ENCODE measurements at regions of chr17 and their contacts with region 1.

Region 1: GRCh38 chr17:39730095-39730921 is at the start of gene MIEN1:
- DNase-seq: peak; percentile 89 to 99 (median 95)
- ATAC-seq: peak; percentile 93
- H3K4me3 ChIP-seq: peak within 1 kb of the TSS; percentile 64 to 72
- H3K4me3 Mint-ChIP-seq: peak within 1 kb of the TSS; percentile 90
- H3K27ac ChIP-seq: peak within 1 kb of the TSS; percentile 78 to 91
- H3K27ac Mint-ChIP-seq: peak within 1 kb of the TSS; percentile 94
- H3K4me1 ChIP-seq: peaks cover 17% of the 10 kb centered on the region
- H3K4me1 Mint-ChIP-seq: peaks cover 17% of the 10 kb centered on the region
- H3K27me3 ChIP-seq: no peaks in the 10 kb centered on the region
- H3K27me3 Mint-ChIP-seq: no peaks in the 10 kb centered on the region
- CTCF ChIP-seq: peak; percentile 98
- total RNA-seq, gene MIEN1: 29.5 to 30.1 TPM

Region 2: GRCh38 chr17:39653662-39654331 is 76.5 kb before region 1 on chr17:
- CTCF ChIA-PET with region 1: interaction called, 16 read pairs
- POLR2A ChIA-PET with region 1: no interaction called
- intact Hi-C with region 1: no loop called
- DNase-seq: peak; percentile 64 to 88 (median 81)
- ATAC-seq: peak; percentile 82
- H3K4me3 ChIP-seq: no peak overlapping the region
- H3K4me3 Mint-ChIP-seq: no peak overlapping the region
- H3K27ac ChIP-seq: no peak overlapping the region
- H3K27ac Mint-ChIP-seq: no peak overlapping the region
- H3K4me1 ChIP-seq: peaks cover 41% of the 10 kb centered on the region
- H3K4me1 Mint-ChIP-seq: peaks cover 60% of the 10 kb centered on the region
- H3K27me3 ChIP-seq: no peaks in the 10 kb centered on the region
- H3K27me3 Mint-ChIP-seq: no peaks in the 10 kb centered on the region
- CTCF ChIP-seq: peak; percentile 83

Region 3: GRCh38 chr17:39687811-39688518 is 42.3 kb before region 1 on chr17 and contains the start of gene PGAP3:
- CTCF ChIA-PET with region 1: interaction called, 10 read pairs
- POLR2A ChIA-PET with region 1: interaction called, 11 read pairs
- intact Hi-C with region 1: loop called (anchors 1 kb)
- DNase-seq: peak; percentile 54 to 92 (median 85)
- ATAC-seq: peak; percentile 93
- H3K4me3 ChIP-seq: peak within 1 kb of the TSS; percentile 68 to 85
- H3K4me3 Mint-ChIP-seq: peak within 1 kb of the TSS; percentile 97
- H3K27ac ChIP-seq: peak within 1 kb of the TSS; percentile 80 to 86
- H3K27ac Mint-ChIP-seq: peak within 1 kb of the TSS; percentile 98
- H3K4me1 ChIP-seq: peaks cover 17% of the 10 kb centered on the region
- H3K4me1 Mint-ChIP-seq: peaks cover 27% of the 10 kb centered on the region
- H3K27me3 ChIP-seq: peaks cover 0 to 2% of the 10 kb centered on the region in 2 experiments
- H3K27me3 Mint-ChIP-seq: no peaks in the 10 kb centered on the region
- CTCF ChIP-seq: no peak
- total RNA-seq, gene PGAP3: 20.9 to 22.6 TPM

Region 4: DNA sequence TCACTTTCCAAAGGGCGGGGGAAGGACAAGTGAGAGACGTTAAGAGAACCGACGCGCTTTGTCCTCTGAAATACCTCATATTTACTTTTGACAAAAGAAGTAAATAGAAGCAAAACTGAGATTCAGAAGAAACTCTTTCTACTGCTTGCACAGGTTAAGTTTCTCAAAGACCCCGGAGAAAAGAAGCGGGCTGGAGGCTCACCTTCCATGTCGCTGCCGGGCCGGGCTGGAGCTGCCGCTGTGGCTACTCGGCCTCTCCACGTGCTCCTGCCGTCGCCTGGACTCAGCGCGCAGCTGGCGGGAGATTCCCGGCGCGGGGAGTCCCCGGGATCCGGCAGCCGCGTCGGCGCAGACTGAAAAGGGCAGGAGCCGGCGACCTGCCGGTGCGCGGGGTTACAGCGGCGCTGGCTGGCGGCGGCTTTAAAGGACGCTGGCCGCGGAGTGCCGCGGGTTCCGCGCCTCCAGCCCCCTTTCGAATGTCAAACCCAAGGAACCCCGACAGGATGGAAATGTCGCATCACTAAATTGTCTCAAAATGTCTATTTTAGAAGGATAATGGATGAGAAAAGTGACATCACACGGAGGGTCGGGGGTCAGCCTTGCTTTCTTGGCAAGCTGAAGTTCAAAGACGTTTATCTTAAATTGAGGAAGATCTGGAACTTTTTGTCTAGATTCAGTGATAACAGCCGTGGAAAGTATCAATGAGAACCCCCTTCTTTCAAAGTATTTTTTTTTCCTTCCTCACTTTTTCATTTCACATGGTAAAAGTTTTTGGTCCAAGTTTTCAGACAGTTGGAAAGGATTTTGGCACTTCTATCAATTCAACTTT is 133.8 kb after region 1 on chr17 and contains the start of gene IKZF3:
- CTCF ChIA-PET with region 1: interaction called, 10 read pairs
- POLR2A ChIA-PET with region 1: interaction called, 5 read pairs
- intact Hi-C with region 1: loop called (anchors 1 kb)
- DNase-seq: peak; percentile 59 to 96 (median 78)
- ATAC-seq: peak; percentile 67
- H3K4me3 ChIP-seq: peak within 1 kb of the TSS; percentile 65 to 74
- H3K4me3 Mint-ChIP-seq: peak within 1 kb of the TSS; percentile 89
- H3K27ac ChIP-seq: peak within 1 kb of the TSS; percentile 92 to 94
- H3K27ac Mint-ChIP-seq: peak within 1 kb of the TSS; percentile 98
- H3K4me1 ChIP-seq: peaks cover 56% of the 10 kb centered on the region
- H3K4me1 Mint-ChIP-seq: peaks cover 61% of the 10 kb centered on the region
- H3K27me3 ChIP-seq: no peaks in the 10 kb centered on the region
- H3K27me3 Mint-ChIP-seq: no peaks in the 10 kb centered on the region
- CTCF ChIP-seq: peak; percentile 49
- total RNA-seq, gene IKZF3: 57.3 to 59.8 TPM

Region 5: GRCh38 chr17:39952680-39953470 is 222.6 kb after region 1 on chr17:
- CTCF ChIA-PET with region 1: no interaction called
- POLR2A ChIA-PET with region 1: no interaction called
- intact Hi-C with region 1: loop called in 1 of 2 experiments (anchors 1 kb)
- DNase-seq: peak; percentile 92 to 97 (median 95)
- ATAC-seq: peak; percentile 87
- H3K4me3 ChIP-seq: peak overlapping the region; percentile 66 to 80
- H3K4me3 Mint-ChIP-seq: peak overlapping the region; percentile 86
- H3K27ac ChIP-seq: peak overlapping the region; percentile 51 to 74
- H3K27ac Mint-ChIP-seq: peak overlapping the region; percentile 89
- H3K4me1 ChIP-seq: peaks cover 26% of the 10 kb centered on the region
- H3K4me1 Mint-ChIP-seq: peaks cover 22% of the 10 kb centered on the region
- H3K27me3 ChIP-seq: no peaks in the 10 kb centered on the region
- H3K27me3 Mint-ChIP-seq: no peaks in the 10 kb centered on the region
- CTCF ChIP-seq: no peak